ENCODE measurements at regions of chr11 and their contacts with region 1.

Region 1: GRCh38 chr11:19938169-19938856 is 222.0 kb downstream of the DBX1 start:
- DNase-seq: peak; percentile 52
- H3K4me3 Mint-ChIP-seq: no peak overlapping the region
- H3K27ac Mint-ChIP-seq: no peak overlapping the region
- H3K4me1 Mint-ChIP-seq: no peaks in the 10 kb centered on the region
- H3K27me3 Mint-ChIP-seq: peaks cover 4% of the 10 kb centered on the region

Region 2: DNA sequence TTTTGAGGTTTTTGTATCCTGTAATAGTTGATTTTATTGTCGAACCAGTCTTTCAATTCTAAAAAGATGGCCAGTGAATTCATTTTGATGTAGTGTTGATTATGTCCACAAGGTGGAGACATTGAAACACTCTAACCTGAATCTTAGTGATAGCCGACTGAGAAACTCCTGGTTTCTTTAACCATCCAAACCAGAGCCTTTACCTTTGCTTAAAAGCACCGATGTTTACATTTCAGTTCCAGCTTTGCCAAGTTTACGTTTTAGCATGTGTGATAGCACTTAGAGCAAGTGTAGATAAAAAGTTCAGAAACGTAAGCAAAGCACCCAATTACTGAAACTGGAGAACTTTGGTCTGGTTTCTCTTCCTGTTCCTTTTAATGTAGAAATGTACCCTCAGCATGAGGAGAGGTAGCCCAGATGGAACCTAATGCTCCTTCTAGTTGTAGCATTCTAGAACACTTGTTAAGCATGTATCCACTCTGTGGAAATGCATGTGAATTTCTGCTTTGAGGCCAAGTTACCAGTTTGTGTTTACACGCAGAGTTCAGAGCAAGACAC is 13.3 kb after region 1 on chr11:
- CTCF ChIA-PET with region 1: interaction called, 16 read pairs
- intact Hi-C with region 1: no loop called
- DNase-seq: no peak
- H3K4me3 Mint-ChIP-seq: peak overlapping the region; percentile 19
- H3K27ac Mint-ChIP-seq: no peak overlapping the region
- H3K4me1 Mint-ChIP-seq: peaks cover 5% of the 10 kb centered on the region
- H3K27me3 Mint-ChIP-seq: peaks cover 2% of the 10 kb centered on the region

Region 3: GRCh38 chr11:20110908-20111669 is 172.8 kb after region 1 on chr11:
- CTCF ChIA-PET with region 1: interaction called, 4 read pairs
- intact Hi-C with region 1: loop called (anchors 1 kb)
- DNase-seq: peak; percentile 68
- H3K4me3 Mint-ChIP-seq: no peak overlapping the region
- H3K27ac Mint-ChIP-seq: no peak overlapping the region
- H3K4me1 Mint-ChIP-seq: no peaks in the 10 kb centered on the region
- H3K27me3 Mint-ChIP-seq: peaks cover 2% of the 10 kb centered on the region

Region 4: GRCh38 chr11:20337526-20338154 is 399.3 kb after region 1 on chr11:
- CTCF ChIA-PET with region 1: no interaction called
- intact Hi-C with region 1: loop called (anchors 1 kb)
- DNase-seq: peak; percentile 35
- H3K4me3 Mint-ChIP-seq: no peak overlapping the region
- H3K27ac Mint-ChIP-seq: no peak overlapping the region
- H3K4me1 Mint-ChIP-seq: no peaks in the 10 kb centered on the region
- H3K27me3 Mint-ChIP-seq: peaks cover 48% of the 10 kb centered on the region

Region 5: DNA sequence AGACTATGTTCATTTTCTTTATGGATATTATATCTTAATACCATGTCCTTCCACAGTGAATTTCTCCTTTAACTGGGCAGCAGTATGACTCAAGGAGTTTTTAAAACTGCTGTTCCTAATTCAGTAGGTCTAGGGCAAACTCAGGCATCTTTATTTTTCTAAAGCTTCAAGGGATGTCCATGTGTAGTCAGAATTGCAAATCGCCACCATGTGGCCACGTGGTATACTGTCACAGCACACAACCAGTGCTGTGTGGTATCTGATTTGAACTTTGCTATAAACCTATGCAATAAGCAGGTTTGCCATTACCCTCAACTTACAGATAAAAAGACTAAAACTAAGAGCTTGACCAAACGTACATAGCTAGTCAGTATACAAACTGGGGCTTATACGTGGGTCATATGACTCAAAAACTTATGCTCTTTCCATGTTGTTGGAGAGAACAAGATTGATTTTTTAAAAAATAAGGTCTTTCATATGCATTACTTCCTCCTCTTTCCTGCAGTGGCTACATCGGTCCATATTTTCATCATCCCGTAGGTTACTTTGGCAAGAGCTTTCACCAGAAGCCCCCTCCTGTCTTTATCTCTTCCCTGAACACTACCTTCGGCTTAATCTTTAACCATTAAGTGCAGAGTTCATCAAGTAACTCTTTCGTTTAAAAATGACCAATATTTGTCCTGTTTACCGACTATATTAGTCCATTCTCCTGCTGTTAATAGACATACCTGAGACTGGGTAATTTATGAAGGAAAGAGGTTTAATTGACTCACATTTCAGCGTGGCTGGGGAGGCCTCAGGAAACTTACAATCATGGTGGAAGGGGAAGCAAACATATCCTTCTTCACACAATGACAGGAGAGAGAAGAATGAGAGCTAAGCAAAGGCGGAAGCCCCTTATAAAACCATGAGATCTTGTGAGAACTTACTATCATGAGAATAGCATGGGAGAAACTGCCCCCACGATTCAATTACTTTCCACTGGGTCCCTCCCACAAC is 417.2 kb after region 1 on chr11:
- CTCF ChIA-PET with region 1: no interaction called
- intact Hi-C with region 1: loop called (anchors 2 kb)
- DNase-seq: peak; percentile 56
- H3K4me3 Mint-ChIP-seq: no peak overlapping the region
- H3K27ac Mint-ChIP-seq: no peak overlapping the region
- H3K4me1 Mint-ChIP-seq: peaks cover 9% of the 10 kb centered on the region
- H3K27me3 Mint-ChIP-seq: no peaks in the 10 kb centered on the region